ENCODE measurements at regions of chr7 and their contacts with region 1.

Region 1: DNA sequence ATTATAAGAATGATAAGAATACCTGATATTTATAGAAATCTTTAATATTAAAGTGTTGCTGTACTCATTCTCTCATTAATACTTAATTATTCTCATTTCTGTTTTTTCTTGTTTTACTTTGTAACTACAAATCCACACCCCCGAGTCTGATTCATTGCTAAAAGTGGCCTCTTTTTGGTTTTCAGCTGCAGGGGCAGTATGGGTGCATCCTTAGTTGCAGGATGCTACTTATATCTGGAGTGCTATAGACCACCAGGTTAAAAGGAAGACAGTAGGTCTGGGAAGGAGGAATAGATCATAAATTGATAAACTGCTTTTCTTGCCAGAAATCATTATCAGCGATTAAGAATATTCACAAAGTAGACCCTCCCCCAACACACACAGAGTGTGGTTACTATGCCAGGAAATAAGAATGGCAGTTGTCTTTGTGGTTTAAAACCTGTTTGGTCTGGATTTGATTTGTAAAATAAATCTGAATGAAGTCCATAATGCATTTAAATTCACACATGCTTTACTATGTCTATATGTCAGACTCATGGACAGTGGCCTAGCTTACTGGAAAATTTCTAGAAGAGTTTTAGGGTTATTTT is 96.5 kb downstream of the NRF1 start:
- DNase-seq: no peak
- ATAC-seq: no peak
- H3K4me3 ChIP-seq: no peak overlapping the region
- H3K27ac ChIP-seq: no peak overlapping the region
- H3K4me1 ChIP-seq: peaks cover 2% of the 10 kb centered on the region
- H3K27me3 ChIP-seq: no peaks in the 10 kb centered on the region
- CTCF ChIP-seq: no peak
- POLR2A ChIP-seq: no peak
- RAD21 ChIP-seq: no peak

Region 2: GRCh38 chr7:129764247-129765084 is 56.5 kb after region 1 on chr7:
- CTCF ChIA-PET with region 1: no interaction called
- POLR2A ChIA-PET with region 1: interaction called, 10 read pairs
- dilution Hi-C with region 1: no loop called
- in situ Hi-C with region 1: no loop called
- intact Hi-C with region 1: no loop called
- DNase-seq: no peak
- ATAC-seq: no peak
- H3K4me3 ChIP-seq: no peak overlapping the region
- H3K27ac ChIP-seq: no peak overlapping the region
- H3K4me1 ChIP-seq: no peaks in the 10 kb centered on the region
- H3K27me3 ChIP-seq: peaks cover 10% of the 10 kb centered on the region; the same call in 1 of the 2 replicates
- CTCF ChIP-seq: no peak
- POLR2A ChIP-seq: no peak
- RAD21 ChIP-seq: no peak

Measured in IMR-90 (cell line).